MCF 10A (cell line): ENCODE measurements at regions of chr15 and their contacts with region 1.

Region 1: DNA sequence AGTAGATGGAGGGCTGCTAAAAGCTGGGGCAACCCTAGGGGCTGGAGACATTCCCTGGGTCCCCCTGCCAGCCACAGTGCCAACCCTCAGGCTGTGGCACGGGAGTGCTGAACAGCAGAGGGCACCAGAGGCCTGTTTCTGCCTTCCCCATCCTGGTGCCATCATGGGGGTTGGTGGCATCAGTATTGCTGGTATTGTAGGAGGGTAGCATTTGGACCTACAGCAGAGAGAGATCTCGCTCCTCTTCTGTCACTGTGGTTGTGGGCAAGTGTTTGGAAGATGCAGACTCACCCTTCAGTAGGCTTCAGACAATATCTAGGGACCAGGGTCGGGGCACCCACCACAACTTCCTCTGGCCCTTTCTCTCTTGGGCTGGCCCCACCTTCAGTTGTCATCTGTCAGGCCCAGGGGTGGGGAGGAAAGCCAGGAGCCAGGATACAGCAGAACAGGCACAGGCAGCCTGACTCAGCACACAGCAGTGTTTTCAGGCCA is 123.5 kb downstream of the RPLP1 start:
- DNase-seq: peak; percentile 61
- H3K4me3 Mint-ChIP-seq: no peak overlapping the region
- H3K27ac Mint-ChIP-seq: no peak overlapping the region
- H3K4me1 Mint-ChIP-seq: peaks cover 21% of the 10 kb centered on the region
- H3K27me3 Mint-ChIP-seq: no peaks in the 10 kb centered on the region
- CTCF ChIP-seq: peak; percentile 82

Region 2: GRCh38 chr15:69460481-69460880 is 115.6 kb before region 1 on chr15:
- CTCF ChIA-PET with region 1: no interaction called
- POLR2A ChIA-PET with region 1: no interaction called
- intact Hi-C with region 1: no loop called
- DNase-seq: no peak
- H3K4me3 Mint-ChIP-seq: no peak overlapping the region
- H3K27ac Mint-ChIP-seq: no peak overlapping the region
- H3K4me1 Mint-ChIP-seq: peaks cover 10% of the 10 kb centered on the region
- H3K27me3 Mint-ChIP-seq: no peaks in the 10 kb centered on the region
- CTCF ChIP-seq: no peak

Region 3: DNA sequence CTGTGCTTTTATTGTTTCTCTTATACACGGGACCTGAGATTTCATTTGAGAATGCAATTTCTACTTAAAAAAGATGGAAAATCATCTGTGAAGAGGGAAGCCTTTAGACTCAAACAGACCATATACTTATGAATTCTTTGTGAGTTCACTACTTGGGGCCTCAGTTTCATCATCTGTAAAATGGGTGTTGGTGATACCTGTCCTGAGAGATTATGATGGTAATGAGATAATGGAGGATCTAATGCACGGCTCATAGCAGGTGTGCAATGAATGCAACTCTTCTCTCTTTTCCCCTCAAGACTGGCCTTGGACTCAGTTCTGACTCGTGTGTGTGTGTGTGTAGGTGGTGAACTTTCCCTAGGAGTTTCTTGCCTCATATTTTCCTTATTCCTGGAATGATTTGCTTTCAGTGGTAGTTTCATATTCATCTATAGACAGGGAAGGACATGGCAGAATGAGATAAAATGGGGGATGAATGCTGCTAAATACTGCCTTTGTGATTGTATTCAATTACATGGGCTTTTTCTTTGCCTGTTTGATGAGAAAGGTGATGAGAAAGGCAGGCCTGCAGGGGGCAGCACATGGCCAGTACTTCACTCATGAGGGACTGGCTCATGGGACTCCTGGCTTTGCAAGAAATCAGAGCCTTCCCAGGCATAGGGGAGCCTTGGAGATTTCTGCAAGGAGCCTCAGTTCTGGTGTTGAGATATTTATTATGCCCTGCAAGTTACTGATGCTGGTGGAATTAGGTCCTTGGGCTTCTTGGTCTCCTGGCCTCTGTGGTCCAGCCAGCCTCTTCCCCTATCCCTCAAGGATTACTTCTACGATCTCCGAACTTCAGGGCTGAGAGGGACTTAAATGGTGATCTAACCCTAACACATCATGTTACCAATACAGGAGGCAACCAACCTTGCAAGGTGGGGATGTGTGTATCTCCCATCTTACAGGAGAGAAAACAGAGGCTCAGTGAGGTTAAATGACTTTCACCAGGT is 52.8 kb before region 1 on chr15:
- CTCF ChIA-PET with region 1: interaction called, 4 read pairs
- POLR2A ChIA-PET with region 1: no interaction called
- intact Hi-C with region 1: loop called (anchors 2 kb)
- DNase-seq: peak; percentile 76
- H3K4me3 Mint-ChIP-seq: no peak overlapping the region
- H3K27ac Mint-ChIP-seq: no peak overlapping the region
- H3K4me1 Mint-ChIP-seq: no peaks in the 10 kb centered on the region
- H3K27me3 Mint-ChIP-seq: peaks cover 11% of the 10 kb centered on the region
- CTCF ChIP-seq: peak; percentile 75

Region 4: GRCh38 chr15:69719527-69720240 is 143.6 kb after region 1 on chr15:
- CTCF ChIA-PET with region 1: no interaction called
- POLR2A ChIA-PET with region 1: no interaction called
- intact Hi-C with region 1: loop called (anchors 2 kb)
- DNase-seq: no peak
- H3K4me3 Mint-ChIP-seq: no peak overlapping the region
- H3K27ac Mint-ChIP-seq: no peak overlapping the region
- H3K4me1 Mint-ChIP-seq: peaks cover 11% of the 10 kb centered on the region
- H3K27me3 Mint-ChIP-seq: peaks cover 34% of the 10 kb centered on the region
- CTCF ChIP-seq: no peak

Region 5: GRCh38 chr15:69777356-69777755 is 201.3 kb after region 1 on chr15:
- CTCF ChIA-PET with region 1: no interaction called
- POLR2A ChIA-PET with region 1: no interaction called
- intact Hi-C with region 1: no loop called
- DNase-seq: no peak
- H3K4me3 Mint-ChIP-seq: no peak overlapping the region
- H3K27ac Mint-ChIP-seq: no peak overlapping the region
- H3K4me1 Mint-ChIP-seq: peaks cover 7% of the 10 kb centered on the region
- H3K27me3 Mint-ChIP-seq: peaks cover 54% of the 10 kb centered on the region
- CTCF ChIP-seq: no peak

Region 6: DNA sequence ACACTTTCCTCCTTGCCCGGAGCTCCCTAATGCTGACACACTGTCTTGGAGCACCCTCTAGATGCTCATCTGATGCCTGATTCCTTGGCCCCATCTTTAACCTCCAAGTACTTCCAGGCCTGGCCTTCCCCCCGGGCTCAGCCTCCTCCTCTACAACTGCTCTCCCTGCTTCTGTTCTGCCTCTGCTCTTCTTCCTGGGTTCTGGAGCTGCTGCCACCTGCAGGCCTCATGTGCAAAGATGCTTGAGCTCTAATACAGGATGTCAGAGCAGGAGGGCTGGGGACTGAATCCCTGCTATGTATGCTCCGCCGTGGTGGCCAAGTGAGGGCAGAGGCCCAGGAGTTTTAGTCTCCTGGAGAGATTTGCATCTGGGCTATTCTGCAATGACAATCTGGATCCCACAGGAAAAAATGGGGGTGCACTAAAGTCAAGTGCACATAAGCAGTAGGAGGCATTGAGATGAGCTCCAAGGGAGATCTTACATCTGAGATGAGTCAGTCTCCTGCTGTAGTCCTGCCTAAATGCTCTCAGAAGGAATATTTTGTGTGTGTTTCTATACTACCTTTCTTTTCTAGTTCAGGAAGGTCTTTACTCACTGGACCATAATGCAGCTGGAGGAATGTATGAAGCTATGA is 890.9 kb after region 1 on chr15:
- CTCF ChIA-PET with region 1: interaction called, 12 read pairs
- POLR2A ChIA-PET with region 1: no interaction called
- intact Hi-C with region 1: loop called (anchors 2 kb)
- DNase-seq: peak; percentile 71
- H3K4me3 Mint-ChIP-seq: no peak overlapping the region
- H3K27ac Mint-ChIP-seq: no peak overlapping the region
- H3K4me1 Mint-ChIP-seq: peaks cover 6% of the 10 kb centered on the region
- H3K27me3 Mint-ChIP-seq: peaks cover 11% of the 10 kb centered on the region
- CTCF ChIP-seq: peak; percentile 68